PC-3 (cell line): ENCODE measurements at regions of chr10 and their contacts with region 1.

Region 1: GRCh38 chr10:70233109-70233938 is at the start of gene PPA1:
- DNase-seq: peak; percentile 100
- ATAC-seq: peak; percentile 87
- H3K4me3 ChIP-seq: peak within 1 kb of the TSS; percentile 91
- H3K27ac ChIP-seq: peak within 1 kb of the TSS; percentile 75
- H3K4me1 ChIP-seq: peaks cover 29% of the 10 kb centered on the region
- H3K27me3 ChIP-seq: no peaks in the 10 kb centered on the region
- CTCF ChIP-seq: peak; percentile 71
- total RNA-seq, gene PPA1: 392 and 440 TPM in 2 replicates

Region 2: DNA sequence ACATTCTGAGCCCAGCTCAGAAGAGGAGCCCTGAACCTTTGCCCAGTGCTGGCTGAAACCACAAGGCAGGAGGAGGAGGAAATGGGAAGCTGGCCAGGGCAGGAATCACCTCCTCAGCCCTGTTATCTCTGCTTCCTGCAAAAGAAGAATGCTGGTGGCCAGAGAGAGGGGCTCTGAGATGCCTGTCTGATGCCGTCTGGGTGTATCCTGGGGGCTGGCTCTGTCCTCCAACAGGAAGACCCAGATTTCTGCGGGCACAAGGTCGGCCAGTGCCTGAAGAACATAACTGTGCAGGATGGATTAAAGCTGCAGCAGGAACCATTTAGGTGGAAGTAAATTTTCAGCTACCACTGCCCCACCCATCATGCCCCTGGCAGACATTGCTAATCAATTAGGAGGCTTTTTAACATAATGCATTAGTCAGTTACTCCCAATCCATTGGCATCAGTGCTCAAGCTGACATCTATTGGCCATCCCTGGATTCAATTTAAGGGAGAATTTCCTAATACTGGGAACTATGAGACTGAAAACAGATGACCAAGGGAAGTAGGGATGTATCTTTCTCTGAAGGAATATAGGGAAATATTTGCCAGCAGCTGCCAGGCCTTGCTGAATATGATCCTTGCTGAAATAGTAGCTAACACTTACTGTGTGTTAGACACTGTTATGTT is 363.9 kb before region 1 on chr10:
- CTCF ChIA-PET with region 1: no interaction called
- POLR2A ChIA-PET with region 1: interaction called, 10 read pairs
- intact Hi-C with region 1: no loop called
- DNase-seq: peak; percentile 99
- ATAC-seq: peak; percentile 64
- H3K4me3 ChIP-seq: peak overlapping the region; percentile 51
- H3K27ac ChIP-seq: peak overlapping the region; percentile 95
- H3K4me1 ChIP-seq: peaks cover 78% of the 10 kb centered on the region
- H3K27me3 ChIP-seq: no peaks in the 10 kb centered on the region
- CTCF ChIP-seq: no peak

Region 3: GRCh38 chr10:70267161-70267933 is 34.0 kb after region 1 on chr10:
- CTCF ChIA-PET with region 1: interaction called, 5 read pairs
- POLR2A ChIA-PET with region 1: interaction called, 6 read pairs
- intact Hi-C with region 1: loop called (anchors 2 kb)
- DNase-seq: peak; percentile 99
- ATAC-seq: peak; percentile 97
- H3K4me3 ChIP-seq: no peak overlapping the region
- H3K27ac ChIP-seq: no peak overlapping the region
- H3K4me1 ChIP-seq: peaks cover 16% of the 10 kb centered on the region
- H3K27me3 ChIP-seq: no peaks in the 10 kb centered on the region
- CTCF ChIP-seq: peak; percentile 51